SK-N-SH (cell line): ENCODE measurements at regions of chr11 and their contacts with region 1.

Region 1: DNA sequence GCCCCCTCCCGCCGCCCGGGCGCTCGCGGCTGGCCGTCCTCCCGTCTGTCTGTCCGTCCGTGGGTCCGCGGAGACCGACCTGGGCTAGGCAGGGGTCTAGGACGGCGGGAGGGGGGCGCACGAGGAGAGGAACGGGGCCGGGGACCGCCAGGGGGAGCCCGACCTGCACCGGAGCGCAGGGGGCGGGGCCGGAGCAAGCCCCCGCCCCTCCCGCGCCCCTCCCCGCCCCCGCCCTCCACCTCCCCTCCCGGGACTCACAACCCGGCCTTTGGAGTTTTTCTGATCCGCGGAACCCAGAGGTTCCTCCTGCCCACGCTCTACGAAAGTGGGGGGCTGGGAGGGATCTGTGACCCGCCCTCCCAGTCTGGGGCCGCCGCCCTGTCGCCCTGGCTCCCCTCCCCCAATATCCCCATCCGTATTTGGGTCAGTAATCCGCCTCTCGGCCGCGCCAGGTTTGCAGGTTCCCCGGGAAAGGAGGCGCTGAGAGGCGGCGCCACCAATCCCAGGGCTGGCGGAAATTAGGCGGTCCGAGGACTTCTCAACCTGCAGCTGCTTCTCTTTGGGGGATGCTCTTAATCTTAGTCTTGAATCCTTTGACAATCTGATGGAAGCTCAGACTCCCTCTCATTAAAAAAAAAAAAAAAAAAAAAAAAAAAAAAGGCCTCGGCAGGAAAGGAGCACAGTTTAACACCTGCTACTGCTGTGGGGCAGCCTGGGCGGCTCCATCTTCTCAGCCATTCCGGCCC is 925 bp upstream of the KCNJ11 start:
- DNase-seq: peak; percentile 98
- H3K4me3 ChIP-seq: peak overlapping the region; percentile 48 to 57; a peak in 3 of 4 replicates
- H3K27ac ChIP-seq: no peak overlapping the region; a peak in 1 of 4 replicates
- H3K4me1 ChIP-seq: peaks cover 0 to 4% of the 10 kb centered on the region in 2 experiments; a peak in 1 of 4 replicates
- H3K27me3 ChIP-seq: peaks cover 10% of the 10 kb centered on the region
- CTCF ChIP-seq: peak; percentile 43
- EP300 ChIP-seq: no peak
- RAD21 ChIP-seq: peak; percentile 27

Region 2: GRCh38 chr11:17244046-17244445 is 145.3 kb before region 1 on chr11:
- CTCF ChIA-PET with region 1: no interaction called
- POLR2A ChIA-PET with region 1: no interaction called
- DNase-seq: no peak
- H3K4me3 ChIP-seq: no peak overlapping the region
- H3K27ac ChIP-seq: no peak overlapping the region
- H3K4me1 ChIP-seq: no peaks in the 10 kb centered on the region
- H3K27me3 ChIP-seq: no peaks in the 10 kb centered on the region
- CTCF ChIP-seq: no peak
- EP300 ChIP-seq: no peak
- RAD21 ChIP-seq: no peak

Region 3: GRCh38 chr11:17400048-17400775 is 10.8 kb after region 1 on chr11:
- CTCF ChIA-PET with region 1: interaction called, 20 read pairs
- POLR2A ChIA-PET with region 1: no interaction called
- DNase-seq: no peak
- H3K4me3 ChIP-seq: no peak overlapping the region
- H3K27ac ChIP-seq: no peak overlapping the region
- H3K4me1 ChIP-seq: peaks cover 0 to 2% of the 10 kb centered on the region in 2 experiments; a peak in 1 of 4 replicates
- H3K27me3 ChIP-seq: no peaks in the 10 kb centered on the region
- CTCF ChIP-seq: no peak
- EP300 ChIP-seq: no peak
- RAD21 ChIP-seq: no peak

Region 4: GRCh38 chr11:17405232-17406005 is 16.0 kb after region 1 on chr11:
- CTCF ChIA-PET with region 1: interaction called, 20 read pairs
- POLR2A ChIA-PET with region 1: no interaction called
- DNase-seq: peak; percentile 78
- H3K4me3 ChIP-seq: no peak overlapping the region
- H3K27ac ChIP-seq: peak overlapping the region in 1 of 2 experiments; percentile 43; a peak in 1 of 4 replicates
- H3K4me1 ChIP-seq: peaks cover 0 to 16% of the 10 kb centered on the region in 2 experiments; a peak in 1 of 4 replicates
- H3K27me3 ChIP-seq: no peaks in the 10 kb centered on the region
- CTCF ChIP-seq: peak; percentile 27; the same call in 1 of the 2 replicates
- EP300 ChIP-seq: no peak; a peak in 1 of 4 replicates
- RAD21 ChIP-seq: 0 out of 2 replicates have a peak, but pooled peaks have one; percentile 20

Region 5: DNA sequence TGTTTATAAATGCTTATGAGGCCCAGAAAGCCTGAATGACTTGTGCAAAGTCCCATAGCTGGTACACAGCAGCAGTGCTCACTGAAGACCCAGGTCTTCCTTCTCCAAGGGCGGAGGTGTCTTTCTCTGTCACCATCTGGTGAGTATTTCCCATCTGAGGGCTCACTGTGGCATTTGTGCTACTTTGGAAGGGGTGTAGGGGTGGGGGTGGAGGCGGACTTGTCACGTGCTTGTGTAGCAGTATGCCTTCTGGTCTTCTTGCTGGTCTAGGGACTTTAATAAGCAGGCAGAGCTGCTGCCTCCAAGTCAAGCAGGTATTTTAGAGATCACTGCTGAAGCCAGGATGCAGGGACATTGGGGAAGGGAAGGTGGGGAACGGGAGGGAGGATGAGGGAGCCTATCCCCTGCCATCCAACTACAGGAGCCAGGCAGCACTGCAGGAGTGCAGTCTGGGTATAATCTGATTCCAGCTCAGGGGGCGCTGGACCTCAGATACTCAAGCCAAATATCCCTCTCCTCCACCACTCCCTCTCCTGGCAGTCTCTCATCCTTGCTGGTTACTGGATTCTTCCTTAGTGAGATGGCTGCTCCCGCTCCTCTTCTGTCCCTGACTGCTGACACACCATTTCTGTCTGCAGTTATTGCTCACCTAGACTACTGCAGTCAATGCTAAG is 83.8 kb after region 1 on chr11:
- CTCF ChIA-PET with region 1: interaction called, 14 read pairs
- POLR2A ChIA-PET with region 1: no interaction called
- DNase-seq: peak; percentile 72
- H3K4me3 ChIP-seq: no peak overlapping the region
- H3K27ac ChIP-seq: no peak overlapping the region
- H3K4me1 ChIP-seq: peaks cover 0 to 16% of the 10 kb centered on the region in 2 experiments; a peak in 1 of 4 replicates
- H3K27me3 ChIP-seq: peaks cover 30% of the 10 kb centered on the region
- CTCF ChIP-seq: peak; percentile 20; the same call in 1 of the 2 replicates
- EP300 ChIP-seq: no peak
- RAD21 ChIP-seq: peak; percentile 26; the same call in 1 of the 2 replicates

Region 6: GRCh38 chr11:17479284-17480214 is 90.2 kb after region 1 on chr11:
- CTCF ChIA-PET with region 1: interaction called, 14 read pairs
- POLR2A ChIA-PET with region 1: no interaction called
- DNase-seq: peak; percentile 85
- H3K4me3 ChIP-seq: peak overlapping the region in 1 of 2 experiments; percentile 25; a peak in 1 of 4 replicates
- H3K27ac ChIP-seq: no peak overlapping the region; a peak in 1 of 4 replicates
- H3K4me1 ChIP-seq: peaks cover 0 to 14% of the 10 kb centered on the region in 2 experiments; a peak in 1 of 4 replicates
- H3K27me3 ChIP-seq: peaks cover 28% of the 10 kb centered on the region
- CTCF ChIP-seq: no peak
- EP300 ChIP-seq: no peak
- RAD21 ChIP-seq: 0 out of 2 replicates have a peak, but pooled peaks have one; percentile 18

Region 7: DNA sequence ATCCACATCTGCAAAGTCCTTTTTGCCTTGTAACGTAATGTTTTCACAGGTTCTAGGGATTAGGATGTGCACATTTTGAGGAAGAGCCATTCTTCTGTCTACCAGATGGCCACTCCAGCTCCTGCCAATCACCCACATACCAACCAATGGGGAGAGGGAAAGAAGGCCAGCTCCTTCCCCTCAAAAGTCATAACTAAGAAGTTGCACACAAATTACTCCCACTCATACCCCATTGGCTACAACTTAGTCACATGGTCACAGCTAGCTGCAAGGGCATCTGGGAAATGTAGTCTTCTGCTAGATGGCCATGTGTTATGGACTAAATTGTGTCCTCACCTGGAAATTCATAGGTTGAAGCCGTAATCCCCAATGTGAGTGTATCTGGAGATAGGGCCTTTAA is 314.6 kb after region 1 on chr11:
- CTCF ChIA-PET with region 1: no interaction called
- POLR2A ChIA-PET with region 1: no interaction called
- DNase-seq: no peak
- H3K4me3 ChIP-seq: no peak overlapping the region
- H3K27ac ChIP-seq: no peak overlapping the region
- H3K4me1 ChIP-seq: no peaks in the 10 kb centered on the region
- H3K27me3 ChIP-seq: no peaks in the 10 kb centered on the region
- CTCF ChIP-seq: no peak
- EP300 ChIP-seq: no peak
- RAD21 ChIP-seq: no peak